Right cardiac atrium (tissue), 5 donors: ENCODE measurements at regions of chr2 and their contacts with region 1.

Region 1: GRCh38 chr2:8669157-8669817 is 12.6 kb upstream of the ID2 start:
- DNase-seq: peak; percentile 69 to 78 (median 72)
- ATAC-seq: peak; percentile 88 to 92
- H3K4me3 ChIP-seq: no peak overlapping the region
- H3K27ac ChIP-seq: peak overlapping the region; percentile 76
- H3K4me1 ChIP-seq: peaks cover 4% of the 10 kb centered on the region
- H3K27me3 ChIP-seq: no peaks in the 10 kb centered on the region

Region 2: GRCh38 chr2:8544786-8545694 is 124.2 kb before region 1 on chr2:
- intact Hi-C with region 1: loop called in 1 of 4 experiments (anchors 5 kb)
- DNase-seq: peak; percentile 65 to 84 (median 83)
- ATAC-seq: peak; percentile 48 to 74
- H3K4me3 ChIP-seq: no peak overlapping the region
- H3K27ac ChIP-seq: no peak overlapping the region
- H3K4me1 ChIP-seq: peaks cover 6% of the 10 kb centered on the region
- H3K27me3 ChIP-seq: no peaks in the 10 kb centered on the region

Region 3: GRCh38 chr2:9256570-9257043 is 587.3 kb after region 1 on chr2:
- intact Hi-C with region 1: no loop called
- DNase-seq: no peak
- ATAC-seq: no peak
- H3K4me3 ChIP-seq: no peak overlapping the region
- H3K27ac ChIP-seq: peak overlapping the region; percentile 11
- H3K4me1 ChIP-seq: peaks cover 21% of the 10 kb centered on the region
- H3K27me3 ChIP-seq: no peaks in the 10 kb centered on the region